ENCODE measurements at regions of chr13 and their contacts with region 1.

Region 1: DNA sequence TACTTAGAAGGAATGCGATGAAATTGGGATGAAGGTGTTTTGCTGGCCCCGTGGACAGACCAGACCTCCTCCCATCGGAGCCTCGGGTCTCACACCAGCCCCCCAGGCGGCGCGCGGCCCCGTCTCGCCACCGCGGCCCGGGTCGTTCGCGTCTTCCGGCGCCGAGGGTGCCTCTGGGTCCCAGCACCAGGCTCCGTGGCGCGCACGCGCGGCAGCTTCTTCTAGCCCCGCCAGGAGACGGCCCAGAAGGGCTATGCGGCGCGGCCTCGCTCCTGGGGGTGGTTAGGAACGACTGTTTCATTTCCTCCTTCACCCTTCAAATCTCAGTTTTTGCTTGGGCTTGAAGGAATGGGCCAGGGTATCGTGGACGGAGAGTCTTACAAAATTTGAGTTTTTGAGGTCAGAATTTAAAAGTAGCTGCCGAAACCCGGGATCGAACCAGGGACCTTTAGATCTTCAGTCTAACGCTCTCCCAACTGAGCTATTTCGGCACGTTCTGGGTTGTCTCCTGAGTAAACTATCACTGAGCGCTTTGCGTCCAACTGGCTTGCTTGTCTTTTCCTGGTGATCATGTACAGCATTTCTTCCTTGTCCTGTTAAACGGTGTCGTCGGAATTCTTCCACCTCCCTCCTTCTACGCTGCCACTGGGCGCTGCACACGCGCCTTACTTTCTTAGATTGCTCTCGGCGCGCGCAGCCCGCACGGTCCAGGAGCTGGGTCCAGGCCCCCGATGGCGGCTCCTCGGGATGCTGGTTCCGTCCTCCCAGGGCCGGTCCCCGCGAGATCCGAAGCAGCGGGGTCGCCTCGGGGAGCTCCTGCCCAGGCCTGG is 46.5 kb downstream of the TGDS start:
- DNase-seq: peak; percentile 86 to 96 (median 92)
- ATAC-seq: peak; percentile 88
- H3K4me3 ChIP-seq: peak overlapping the region; percentile 76 to 84
- H3K4me3 Mint-ChIP-seq: peak overlapping the region; percentile 91
- H3K27ac ChIP-seq: peak overlapping the region; percentile 90 to 92
- H3K27ac Mint-ChIP-seq: peak overlapping the region; percentile 97
- H3K4me1 ChIP-seq: peaks cover 13% of the 10 kb centered on the region
- H3K4me1 Mint-ChIP-seq: peaks cover 21% of the 10 kb centered on the region
- H3K27me3 ChIP-seq: no peaks in the 10 kb centered on the region
- H3K27me3 Mint-ChIP-seq: peaks cover 2% of the 10 kb centered on the region
- CTCF ChIP-seq: no peak

Region 2: GRCh38 chr13:94327318-94327717 is 222.1 kb before region 1 on chr13:
- CTCF ChIA-PET with region 1: no interaction called
- POLR2A ChIA-PET with region 1: no interaction called
- intact Hi-C with region 1: loop called in 1 of 2 experiments (anchors 2 kb)
- DNase-seq: peak in 4 of 9 experiments; percentile 40 to 64 (median 54)
- ATAC-seq: peak; percentile 29
- H3K4me3 ChIP-seq: peak overlapping the region; percentile 1 to 3
- H3K4me3 Mint-ChIP-seq: peak overlapping the region; percentile 71
- H3K27ac ChIP-seq: peak overlapping the region in 1 of 2 experiments; percentile 63
- H3K27ac Mint-ChIP-seq: peak overlapping the region; percentile 82
- H3K4me1 ChIP-seq: peaks cover 77% of the 10 kb centered on the region
- H3K4me1 Mint-ChIP-seq: peaks cover 83% of the 10 kb centered on the region
- H3K27me3 ChIP-seq: no peaks in the 10 kb centered on the region
- H3K27me3 Mint-ChIP-seq: peaks cover 8% of the 10 kb centered on the region
- CTCF ChIP-seq: no peak

Region 3: DNA sequence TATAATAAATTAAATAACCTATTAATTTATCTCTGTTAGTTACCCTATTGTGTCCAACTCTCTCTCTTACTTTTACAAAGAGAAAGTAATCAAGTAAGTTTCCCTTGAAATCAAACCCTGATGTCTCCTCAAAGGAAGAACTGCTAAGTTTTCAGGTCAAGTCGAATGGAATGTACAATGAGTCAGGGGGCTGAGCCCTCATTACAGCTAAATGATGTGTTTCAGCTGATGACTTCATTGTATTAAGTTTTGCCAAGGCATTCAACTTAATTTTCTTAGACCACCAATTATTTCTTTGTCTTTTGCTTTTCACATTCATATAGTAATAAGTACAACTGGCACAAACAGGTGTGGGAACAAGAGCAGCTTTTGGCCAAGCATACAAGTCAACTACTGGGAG is 15.3 kb before region 1 on chr13:
- CTCF ChIA-PET with region 1: no interaction called
- POLR2A ChIA-PET with region 1: interaction called, 10 read pairs
- intact Hi-C with region 1: no loop called
- DNase-seq: no peak
- ATAC-seq: no peak
- H3K4me3 ChIP-seq: no peak overlapping the region
- H3K4me3 Mint-ChIP-seq: no peak overlapping the region
- H3K27ac ChIP-seq: no peak overlapping the region
- H3K27ac Mint-ChIP-seq: no peak overlapping the region
- H3K4me1 ChIP-seq: peaks cover 15% of the 10 kb centered on the region
- H3K4me1 Mint-ChIP-seq: peaks cover 22% of the 10 kb centered on the region
- H3K27me3 ChIP-seq: no peaks in the 10 kb centered on the region
- H3K27me3 Mint-ChIP-seq: no peaks in the 10 kb centered on the region
- CTCF ChIP-seq: no peak

Region 4: GRCh38 chr13:94601446-94602431 is 52.3 kb after region 1 on chr13 and contains the start of gene GPR180:
- CTCF ChIA-PET with region 1: interaction called, 19 read pairs
- POLR2A ChIA-PET with region 1: interaction called, 44 read pairs
- intact Hi-C with region 1: loop called (anchors 1 to 2 kb)
- DNase-seq: peak; percentile 66 to 97 (median 87)
- ATAC-seq: peak; percentile 98
- H3K4me3 ChIP-seq: peak within 1 kb of the TSS; percentile 62 to 76
- H3K4me3 Mint-ChIP-seq: peak within 1 kb of the TSS; percentile 84
- H3K27ac ChIP-seq: peak within 1 kb of the TSS; percentile 43 to 51
- H3K27ac Mint-ChIP-seq: peak within 1 kb of the TSS; percentile 86
- H3K4me1 ChIP-seq: peaks cover 3% of the 10 kb centered on the region
- H3K4me1 Mint-ChIP-seq: peaks cover 42% of the 10 kb centered on the region
- H3K27me3 ChIP-seq: no peaks in the 10 kb centered on the region
- H3K27me3 Mint-ChIP-seq: no peaks in the 10 kb centered on the region
- CTCF ChIP-seq: no peak
- total RNA-seq, gene GPR180: 0.64 to 0.71 TPM

Region 5: GRCh38 chr13:95181586-95181985 is 632.1 kb after region 1 on chr13:
- CTCF ChIA-PET with region 1: no interaction called
- POLR2A ChIA-PET with region 1: no interaction called
- intact Hi-C with region 1: loop called (anchors 5 to 10 kb)
- DNase-seq: no peak
- ATAC-seq: no peak
- H3K4me3 ChIP-seq: no peak overlapping the region
- H3K4me3 Mint-ChIP-seq: no peak overlapping the region
- H3K27ac ChIP-seq: no peak overlapping the region
- H3K27ac Mint-ChIP-seq: no peak overlapping the region
- H3K4me1 ChIP-seq: peaks cover 49% of the 10 kb centered on the region
- H3K4me1 Mint-ChIP-seq: peaks cover 82% of the 10 kb centered on the region
- H3K27me3 ChIP-seq: no peaks in the 10 kb centered on the region
- H3K27me3 Mint-ChIP-seq: no peaks in the 10 kb centered on the region
- CTCF ChIP-seq: no peak